ENCODE measurements at regions of chr16 and their contacts with region 1.

Region 1: GRCh38 chr16:19886073-19886941 is 1.7 kb upstream of the GPRC5B start:
- DNase-seq: peak; percentile 75
- ATAC-seq: peak; percentile 62
- H3K4me3 ChIP-seq: no peak overlapping the region; the same call in 1 of the 2 replicates
- H3K27ac ChIP-seq: no peak overlapping the region
- H3K4me1 ChIP-seq: peaks cover 5% of the 10 kb centered on the region; the same call in 1 of the 2 replicates
- H3K27me3 ChIP-seq: peaks cover 14% of the 10 kb centered on the region
- CTCF ChIP-seq: peak; percentile 99
- POLR2A ChIP-seq: peak; percentile 60
- RAD21 ChIP-seq: peak; percentile 100

Region 2: DNA sequence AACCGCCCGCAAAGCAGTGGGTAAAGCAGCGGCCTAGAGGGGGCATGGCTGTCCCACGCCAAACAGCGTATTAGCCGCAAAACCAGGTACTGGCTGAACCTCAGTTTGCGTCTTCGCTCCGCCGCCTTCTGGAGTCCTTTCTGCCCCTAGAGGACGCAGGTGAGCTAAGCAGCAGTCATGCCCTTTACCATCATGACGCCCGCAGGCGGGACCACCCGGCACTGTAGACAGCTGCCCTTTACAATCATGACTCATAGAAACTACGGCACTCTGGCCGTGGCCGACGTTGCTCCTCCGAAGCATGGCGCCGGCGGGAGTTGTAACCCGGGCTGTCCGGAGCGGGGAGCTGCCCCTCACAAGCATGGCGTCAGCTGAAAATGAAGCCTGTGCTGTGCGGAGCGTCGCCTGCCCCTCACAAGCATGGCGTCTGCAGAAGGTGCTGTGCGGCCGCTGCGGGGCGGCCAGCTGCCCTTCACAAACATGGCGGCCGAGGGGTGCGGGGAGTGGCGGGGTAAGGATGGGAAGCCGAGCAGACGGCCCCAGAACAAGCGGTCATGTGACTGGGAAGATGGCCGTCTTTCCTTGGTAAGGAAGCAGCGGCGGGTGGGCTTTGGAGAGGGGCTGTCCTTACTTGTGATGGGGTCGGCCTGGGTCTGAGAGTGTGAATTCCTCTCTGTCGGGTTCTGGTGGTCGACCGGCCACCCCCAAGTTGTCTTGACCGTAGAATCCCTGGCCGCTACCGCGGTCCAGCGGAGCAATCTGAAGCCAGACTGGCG is 331.0 kb before region 1 on chr16 and contains the start of gene VPS35L:
- CTCF ChIA-PET with region 1: no interaction called
- POLR2A ChIA-PET with region 1: no interaction called
- dilution Hi-C with region 1: no loop called
- in situ Hi-C with region 1: no loop called
- intact Hi-C with region 1: loop called (anchors 1 kb)
- DNase-seq: peak; percentile 99
- ATAC-seq: peak; percentile 99
- H3K4me3 ChIP-seq: peak within 1 kb of the TSS; percentile 87
- H3K27ac ChIP-seq: peak within 1 kb of the TSS; percentile 87
- H3K4me1 ChIP-seq: peaks cover 4% of the 10 kb centered on the region
- H3K27me3 ChIP-seq: no peaks in the 10 kb centered on the region
- CTCF ChIP-seq: peak; percentile 68
- POLR2A ChIP-seq: peak; percentile 92
- RAD21 ChIP-seq: peak; percentile 21; the same call in 1 of the 2 replicates
- total RNA-seq, gene VPS35L: 20.3 and 28.0 TPM in 2 replicates

Region 3: GRCh38 chr16:19639986-19640421 is 246.3 kb before region 1 on chr16:
- CTCF ChIA-PET with region 1: no interaction called
- POLR2A ChIA-PET with region 1: no interaction called
- dilution Hi-C with region 1: no loop called
- in situ Hi-C with region 1: no loop called
- intact Hi-C with region 1: loop called (anchors 2 kb)
- DNase-seq: no peak
- ATAC-seq: no peak; the same call in 1 of the 2 replicates
- H3K4me3 ChIP-seq: no peak overlapping the region
- H3K27ac ChIP-seq: no peak overlapping the region
- H3K4me1 ChIP-seq: no peaks in the 10 kb centered on the region
- H3K27me3 ChIP-seq: no peaks in the 10 kb centered on the region
- CTCF ChIP-seq: no peak
- POLR2A ChIP-seq: no peak
- RAD21 ChIP-seq: no peak

Region 4: DNA sequence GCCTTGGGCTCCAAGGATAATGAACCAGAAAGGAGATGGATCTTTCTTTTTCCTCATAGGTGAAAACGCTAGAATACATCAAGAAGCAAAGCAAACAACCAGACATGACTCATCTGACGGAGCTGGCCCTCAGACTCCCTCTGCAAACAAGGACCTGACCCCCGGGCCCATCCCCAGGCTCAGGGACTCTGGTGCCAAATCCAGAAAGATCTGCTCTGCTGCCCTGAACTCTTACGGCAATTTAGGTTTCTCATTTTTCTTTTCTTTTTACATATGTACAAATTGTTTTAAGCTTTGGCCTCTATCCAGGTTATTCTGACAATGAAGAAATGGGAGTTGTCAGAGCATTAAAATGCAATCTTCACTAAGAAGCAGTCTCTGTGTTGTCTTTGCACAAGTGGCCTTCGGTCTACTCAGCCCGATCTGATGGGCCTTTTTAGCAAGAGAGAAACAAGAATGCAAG is 186.0 kb before region 1 on chr16:
- CTCF ChIA-PET with region 1: no interaction called
- POLR2A ChIA-PET with region 1: no interaction called
- dilution Hi-C with region 1: no loop called
- in situ Hi-C with region 1: no loop called
- intact Hi-C with region 1: loop called (anchors 5 kb)
- DNase-seq: peak; percentile 70
- ATAC-seq: peak; percentile 60
- H3K4me3 ChIP-seq: no peak overlapping the region
- H3K27ac ChIP-seq: no peak overlapping the region
- H3K4me1 ChIP-seq: peaks cover 24% of the 10 kb centered on the region
- H3K27me3 ChIP-seq: no peaks in the 10 kb centered on the region
- CTCF ChIP-seq: no peak
- POLR2A ChIP-seq: no peak
- RAD21 ChIP-seq: no peak